ENCODE measurements at regions of chr17 and their contacts with region 1.

Region 1: DNA sequence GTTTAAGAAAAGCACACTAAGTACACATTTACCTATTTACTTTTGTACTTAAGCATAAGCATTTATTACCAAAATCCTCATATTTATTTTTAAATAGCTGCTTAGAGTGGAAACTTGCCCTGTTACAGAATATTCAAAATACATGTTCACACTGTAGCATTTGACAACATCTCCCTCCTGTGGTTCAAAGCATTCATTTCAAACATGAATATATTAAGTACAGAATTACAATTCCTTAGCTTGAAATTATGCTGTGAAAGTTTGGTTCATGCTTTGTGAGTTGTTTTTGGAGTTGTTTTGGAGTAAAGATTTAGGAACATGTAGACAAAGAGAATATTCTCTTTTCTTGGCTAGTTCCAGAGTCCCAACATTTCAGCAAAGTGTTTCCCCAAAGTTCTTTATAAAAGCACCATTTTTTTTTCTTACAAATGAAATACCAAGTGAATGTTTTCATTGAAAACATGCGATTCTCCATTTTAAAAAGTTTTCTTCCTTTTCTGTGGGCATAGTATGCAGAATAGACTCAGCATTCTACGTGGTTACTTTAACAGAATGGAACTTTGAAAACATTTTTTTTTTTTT is 33.2 kb downstream of the TUBD1 start:
- H3K4me3 ChIP-seq: no peak overlapping the region
- H3K27ac ChIP-seq: no peak overlapping the region
- H3K4me1 ChIP-seq: no peaks in the 10 kb centered on the region
- CTCF ChIP-seq: no peak

Region 2: GRCh38 chr17:59565970-59566602 is 293.4 kb before region 1 on chr17:
- CTCF ChIA-PET with region 1: no interaction called
- POLR2A ChIA-PET with region 1: no interaction called
- H3K4me3 ChIP-seq: peak overlapping the region; percentile 90
- H3K27ac ChIP-seq: peak overlapping the region; percentile 37; the same call in 1 of the 2 replicates
- H3K4me1 ChIP-seq: peaks cover 5% of the 10 kb centered on the region; the same call in 1 of the 2 replicates
- CTCF ChIP-seq: no peak

Region 3: GRCh38 chr17:59762513-59763374 is 96.8 kb before region 1 on chr17:
- CTCF ChIA-PET with region 1: interaction called, 13 read pairs
- POLR2A ChIA-PET with region 1: interaction called, 5 read pairs
- H3K4me3 ChIP-seq: no peak overlapping the region
- H3K27ac ChIP-seq: no peak overlapping the region
- H3K4me1 ChIP-seq: peaks cover 9% of the 10 kb centered on the region; the same call in 1 of the 2 replicates
- CTCF ChIP-seq: no peak

Region 4: GRCh38 chr17:59941131-59941530 is 81.6 kb after region 1 on chr17:
- CTCF ChIA-PET with region 1: no interaction called
- POLR2A ChIA-PET with region 1: interaction called, 13 read pairs
- H3K4me3 ChIP-seq: no peak overlapping the region
- H3K27ac ChIP-seq: no peak overlapping the region
- H3K4me1 ChIP-seq: no peaks in the 10 kb centered on the region
- CTCF ChIP-seq: no peak